ENCODE measurements at regions of chr14 and their contacts with region 1.

Region 1: GRCh38 chr14:69242311-69243224 is 17.4 kb upstream of the GALNT16 start:
- DNase-seq: peak; percentile 38 to 66
- ATAC-seq: peak; percentile 84

Region 2: GRCh38 chr14:69354383-69355153 is 112.0 kb after region 1 on chr14:
- intact Hi-C with region 1: loop called in 1 of 2 experiments (anchors 10 kb)
- DNase-seq: peak; percentile 61 to 71
- ATAC-seq: peak; percentile 83

Region 3: DNA sequence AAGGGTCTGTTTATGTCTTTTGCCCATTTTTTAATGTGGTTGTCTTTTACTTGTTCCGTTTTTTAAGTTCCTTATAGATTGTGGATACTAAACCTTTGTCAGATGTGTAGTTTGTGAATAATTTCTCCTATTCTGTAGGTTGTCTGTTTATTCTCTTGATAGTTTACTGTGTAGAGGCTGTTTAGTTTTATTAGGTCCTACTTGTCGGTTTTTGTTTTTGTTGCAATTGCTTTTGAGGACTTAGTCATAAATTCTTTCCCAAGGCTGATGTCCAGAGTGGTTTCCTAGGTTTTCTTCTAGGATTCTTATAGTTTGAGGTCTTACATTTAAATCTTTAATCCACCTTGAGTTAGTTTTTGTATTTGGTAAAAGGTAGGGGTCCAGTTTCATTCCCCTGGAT is 189.8 kb after region 1 on chr14:
- intact Hi-C with region 1: no loop called
- DNase-seq: no peak
- ATAC-seq: no peak

Region 4: GRCh38 chr14:69460093-69460701 is 217.6 kb after region 1 on chr14:
- intact Hi-C with region 1: loop called in 1 of 2 experiments (anchors 5 kb)
- DNase-seq: peak; percentile 54 to 65
- ATAC-seq: peak; percentile 96